ENCODE measurements at regions of chr6 and their contacts with region 1.

Region 1: DNA sequence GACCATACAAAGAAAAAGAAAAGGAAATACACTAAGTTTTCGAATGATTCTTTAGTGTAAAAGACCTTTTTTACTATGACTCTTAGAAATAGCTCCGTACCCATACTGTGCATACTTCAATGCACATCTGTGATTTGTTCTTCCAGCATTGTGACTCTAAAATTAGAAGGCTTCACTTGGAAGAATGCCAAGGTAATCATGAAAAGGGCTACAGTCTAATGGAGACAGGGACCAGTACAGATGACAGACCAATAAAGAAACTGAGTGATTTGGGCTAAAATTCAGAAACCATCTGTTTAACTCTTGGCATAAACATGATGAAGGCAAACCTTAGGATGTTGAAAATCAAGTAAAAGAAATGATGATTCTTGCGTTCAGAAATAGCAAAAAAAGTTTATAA is 46.3 kb downstream of the CYP39A1 start:
- DNase-seq: no peak
- ATAC-seq: no peak

Region 2: DNA sequence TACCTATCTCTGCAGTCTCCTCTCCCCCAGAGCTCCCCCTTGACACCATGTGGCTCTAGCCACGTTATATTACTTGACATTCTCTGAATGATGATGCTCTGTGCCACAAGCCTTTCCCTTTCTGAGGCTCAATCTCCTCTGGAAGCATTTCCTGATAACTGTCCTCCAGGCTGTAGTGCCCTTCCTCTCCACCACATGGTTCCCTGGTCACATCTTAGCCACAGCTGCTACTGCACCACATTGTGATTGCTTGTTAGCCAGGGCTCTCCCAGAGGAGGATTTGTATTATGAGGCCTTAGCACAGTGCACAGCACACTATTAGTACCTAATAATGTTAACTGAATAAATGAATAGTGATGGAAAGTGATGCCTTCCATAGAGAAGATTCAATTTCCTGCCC is 51.2 kb before region 1 on chr6:
- intact Hi-C with region 1: loop called (anchors 2 kb)
- DNase-seq: no peak
- ATAC-seq: no peak

Measured in sciatic nerve (tissue), 2 donors.